AG04450 (cell line): ENCODE measurements at regions of chr3 and their contacts with region 1.

Region 1: DNA sequence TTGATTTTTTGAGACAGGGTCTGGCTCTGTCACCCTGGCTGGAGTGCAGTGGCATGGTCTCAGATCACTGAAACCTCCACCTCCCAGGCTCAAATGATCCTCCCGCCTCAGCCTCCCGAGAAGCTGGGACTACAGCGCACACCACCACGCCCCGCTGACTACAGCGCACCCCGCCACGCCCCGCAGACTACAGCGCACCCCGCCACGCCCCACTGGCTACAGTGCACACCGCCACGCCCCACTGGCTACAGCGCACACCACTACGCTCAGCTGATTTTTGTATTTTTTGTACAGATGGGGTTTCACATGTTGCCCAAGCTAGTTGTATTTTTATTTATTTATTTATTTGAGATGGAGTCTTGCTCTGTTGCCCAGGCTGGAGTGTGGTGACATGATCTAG is 35.6 kb downstream of the SLC51A start:
- DNase-seq: no peak
- H3K4me3 ChIP-seq: no peak overlapping the region
- H3K27ac ChIP-seq: no peak overlapping the region
- H3K27me3 ChIP-seq: no peaks in the 10 kb centered on the region
- CTCF ChIP-seq: no peak

Region 2: DNA sequence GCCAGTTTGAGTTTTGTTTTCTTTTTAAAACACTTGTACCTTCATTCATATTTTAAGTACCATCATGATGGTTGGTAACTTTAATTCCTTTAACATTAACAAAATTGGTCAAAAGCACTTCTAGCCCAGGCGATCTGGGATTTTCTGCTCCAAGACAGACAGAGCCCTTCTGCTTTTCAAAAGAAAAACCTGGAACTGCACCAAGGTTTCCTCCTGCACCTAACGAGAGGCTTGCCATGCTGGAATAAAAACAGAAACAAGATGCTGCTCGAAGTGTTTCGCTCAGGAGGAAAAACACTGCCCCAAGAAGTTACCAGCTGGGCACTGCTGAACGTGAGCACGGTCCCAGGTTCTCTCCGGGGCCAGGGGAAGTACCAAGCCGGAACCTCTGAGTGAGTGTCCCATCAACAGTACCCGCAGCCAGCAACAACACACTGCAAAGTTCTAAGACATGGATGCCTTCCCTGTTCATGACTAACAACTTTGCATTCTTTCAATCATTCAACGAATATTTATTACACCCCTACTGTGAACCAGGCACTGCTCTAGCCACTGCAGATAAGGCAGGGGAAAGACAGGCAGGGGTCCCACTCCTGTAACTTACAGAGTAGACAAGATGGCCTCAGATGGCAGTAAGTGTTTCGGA is 1079.8 kb before region 1 on chr3:
- CTCF ChIA-PET with region 1: no interaction called
- POLR2A ChIA-PET with region 1: no interaction called
- DNase-seq: no peak
- H3K4me3 ChIP-seq: no peak overlapping the region
- H3K27ac ChIP-seq: no peak overlapping the region
- H3K27me3 ChIP-seq: no peaks in the 10 kb centered on the region
- CTCF ChIP-seq: no peak

Region 3: DNA sequence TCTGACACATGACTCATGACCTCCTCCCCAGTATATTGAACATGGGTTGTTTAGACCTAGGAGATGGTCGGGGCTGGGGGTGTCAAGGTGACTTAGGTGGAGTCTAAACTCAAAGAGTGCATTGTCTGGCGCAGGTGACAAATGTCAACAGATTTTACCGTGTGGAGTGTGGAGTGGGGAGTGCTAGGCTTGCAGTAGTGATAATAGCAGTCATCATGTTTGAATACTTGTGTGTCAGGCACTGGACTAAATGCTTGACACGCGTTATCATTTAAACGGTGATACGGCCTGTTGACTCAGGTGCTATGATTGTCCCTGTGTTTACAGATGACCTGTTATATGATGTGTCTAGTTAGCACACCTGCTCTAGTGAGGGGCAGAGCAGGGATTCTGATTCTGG is 500.4 kb before region 1 on chr3:
- CTCF ChIA-PET with region 1: no interaction called
- POLR2A ChIA-PET with region 1: no interaction called
- DNase-seq: no peak
- H3K4me3 ChIP-seq: no peak overlapping the region
- H3K27ac ChIP-seq: no peak overlapping the region
- H3K27me3 ChIP-seq: peaks cover 24% of the 10 kb centered on the region
- CTCF ChIP-seq: no peak

Region 4: GRCh38 chr3:196227121-196227561 is 24.8 kb before region 1 on chr3:
- CTCF ChIA-PET with region 1: no interaction called
- POLR2A ChIA-PET with region 1: no interaction called
- DNase-seq: no peak
- H3K4me3 ChIP-seq: no peak overlapping the region
- H3K27ac ChIP-seq: no peak overlapping the region
- H3K27me3 ChIP-seq: peaks cover 7% of the 10 kb centered on the region
- CTCF ChIP-seq: no peak

Region 5: GRCh38 chr3:196240424-196240823 is 11.5 kb before region 1 on chr3:
- CTCF ChIA-PET with region 1: interaction called, 22 read pairs
- POLR2A ChIA-PET with region 1: no interaction called
- DNase-seq: no peak
- H3K4me3 ChIP-seq: no peak overlapping the region
- H3K27ac ChIP-seq: no peak overlapping the region
- H3K27me3 ChIP-seq: no peaks in the 10 kb centered on the region
- CTCF ChIP-seq: no peak

Region 6: GRCh38 chr3:196268270-196269163 is 16.6 kb after region 1 on chr3:
- CTCF ChIA-PET with region 1: interaction called, 20 read pairs
- POLR2A ChIA-PET with region 1: no interaction called
- DNase-seq: no peak
- H3K4me3 ChIP-seq: no peak overlapping the region
- H3K27ac ChIP-seq: peak overlapping the region; percentile 47
- H3K27me3 ChIP-seq: no peaks in the 10 kb centered on the region
- CTCF ChIP-seq: no peak

Region 7: DNA sequence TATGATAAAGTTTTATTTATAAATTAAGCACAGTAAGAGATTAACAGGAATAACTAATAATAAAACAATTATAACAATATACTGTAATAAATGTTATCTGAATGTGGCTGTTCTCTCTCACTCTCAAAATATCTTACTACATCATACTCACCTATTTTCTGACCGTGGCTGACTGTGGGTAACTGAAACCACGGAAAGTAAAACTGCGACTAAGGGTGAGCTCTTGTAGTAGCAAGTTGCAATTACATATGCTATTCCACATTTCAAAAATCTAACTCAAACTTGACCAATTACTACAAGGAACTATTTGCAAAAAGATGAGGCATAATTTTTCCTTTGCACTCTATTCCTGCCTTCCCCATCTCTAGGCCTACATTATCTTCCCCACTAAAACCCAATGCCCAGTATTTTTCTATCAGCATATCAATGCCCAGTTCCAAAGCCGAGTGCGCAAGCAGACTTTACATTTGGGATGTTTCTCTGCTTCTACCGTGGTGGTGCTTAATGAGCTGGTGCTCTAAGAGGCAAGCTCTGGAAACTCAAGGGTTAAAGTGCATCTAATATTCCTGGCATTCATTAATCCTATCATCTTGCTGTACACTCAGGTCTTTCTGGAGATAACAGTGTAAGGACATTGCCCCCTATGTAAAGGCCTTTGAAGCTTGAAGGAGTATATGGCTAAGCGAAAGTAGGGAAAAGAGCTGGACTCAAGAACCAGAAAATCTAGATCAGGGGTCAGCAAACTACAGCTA is 28.9 kb after region 1 on chr3:
- CTCF ChIA-PET with region 1: interaction called, 12 read pairs
- POLR2A ChIA-PET with region 1: no interaction called
- DNase-seq: no peak
- H3K4me3 ChIP-seq: no peak overlapping the region
- H3K27ac ChIP-seq: no peak overlapping the region
- H3K27me3 ChIP-seq: no peaks in the 10 kb centered on the region
- CTCF ChIP-seq: no peak

Region 8: GRCh38 chr3:196408565-196409300 is 156.8 kb after region 1 on chr3:
- CTCF ChIA-PET with region 1: interaction called, 10 read pairs
- POLR2A ChIA-PET with region 1: no interaction called
- DNase-seq: no peak
- H3K4me3 ChIP-seq: no peak overlapping the region
- H3K27ac ChIP-seq: no peak overlapping the region
- H3K27me3 ChIP-seq: no peaks in the 10 kb centered on the region
- CTCF ChIP-seq: no peak

Region 9: GRCh38 chr3:196432137-196432879 is 180.4 kb after region 1 on chr3 and contains the start of gene UBXN7:
- CTCF ChIA-PET with region 1: no interaction called
- POLR2A ChIA-PET with region 1: no interaction called
- DNase-seq: peak; percentile 85
- H3K4me3 ChIP-seq: peak within 1 kb of the TSS; percentile 94
- H3K27ac ChIP-seq: peak within 1 kb of the TSS; percentile 73
- H3K27me3 ChIP-seq: no peaks in the 10 kb centered on the region
- CTCF ChIP-seq: no peak
- polyA plus RNA-seq, gene UBXN7: 20.6 and 28.6 TPM in 2 replicates

Region 10: DNA sequence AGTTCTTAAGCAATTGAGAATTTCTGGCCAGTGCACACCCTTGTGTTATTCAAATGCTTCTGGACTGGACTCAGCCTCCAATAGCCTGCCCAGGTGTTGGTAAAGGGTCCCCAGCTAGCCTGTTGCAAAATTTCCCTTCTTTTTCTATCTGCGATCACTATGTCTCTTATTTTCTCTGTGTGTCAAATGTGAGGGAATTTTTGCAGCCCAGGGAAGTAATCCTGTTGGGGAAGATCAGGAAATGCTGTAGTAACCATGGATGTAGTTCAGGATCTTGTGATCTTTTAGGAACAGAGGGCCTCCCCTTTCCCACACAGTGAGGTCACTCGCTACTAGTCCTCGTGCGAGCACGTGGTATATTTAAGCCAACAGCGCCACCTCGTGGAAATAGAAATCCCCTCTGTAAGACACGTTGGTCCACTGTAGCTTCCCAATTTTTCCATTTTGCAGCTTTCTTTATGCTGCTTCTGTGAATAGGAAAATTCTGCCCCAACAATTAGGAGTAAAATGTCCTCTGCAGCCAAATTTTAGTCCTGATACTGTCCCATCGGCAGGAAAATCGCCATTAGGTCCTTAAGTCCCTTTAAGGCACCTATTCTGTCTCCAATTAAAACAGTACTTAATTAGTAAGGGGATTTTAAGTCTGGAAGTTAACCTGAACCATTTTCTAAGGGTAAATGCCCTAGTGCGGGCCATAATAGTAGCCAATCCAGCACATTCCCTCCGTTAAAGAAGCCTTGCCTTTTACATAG is 267.2 kb after region 1 on chr3:
- CTCF ChIA-PET with region 1: interaction called, 19 read pairs
- POLR2A ChIA-PET with region 1: no interaction called
- DNase-seq: no peak
- H3K4me3 ChIP-seq: no peak overlapping the region
- H3K27ac ChIP-seq: no peak overlapping the region
- H3K27me3 ChIP-seq: no peaks in the 10 kb centered on the region
- CTCF ChIP-seq: peak; percentile 51